Astrocyte of the cerebellum (primary cell): ENCODE measurements at regions of chr17 and their contacts with region 1.

Region 1: GRCh38 chr17:67289181-67289876 is 44.3 kb upstream of the HELZ start:
- DNase-seq: peak; percentile 29
- H3K4me3 ChIP-seq: peak overlapping the region; percentile 9
- CTCF ChIP-seq: no peak

Region 2: DNA sequence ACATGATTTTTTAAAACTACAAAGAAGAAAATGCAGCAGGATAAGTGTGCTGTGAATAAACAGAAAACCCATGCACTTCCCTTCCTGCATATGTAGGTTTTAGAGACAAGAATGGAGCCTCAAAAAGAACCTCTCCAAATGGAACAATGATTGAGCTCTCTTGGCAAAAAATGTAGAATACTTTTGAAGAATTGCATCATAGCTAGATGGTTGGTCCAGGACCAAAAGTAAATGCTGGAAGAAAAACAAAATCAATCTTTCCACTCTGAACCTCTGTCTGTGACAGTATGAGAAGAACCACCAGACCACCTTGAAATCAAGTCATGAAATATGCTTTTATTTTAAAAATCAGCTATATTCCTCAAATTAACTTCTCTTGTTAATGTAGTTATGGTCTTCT is 61.8 kb before region 1 on chr17:
- in situ Hi-C with region 1: no loop called
- DNase-seq: no peak
- H3K4me3 ChIP-seq: no peak overlapping the region
- CTCF ChIP-seq: no peak

Region 3: GRCh38 chr17:67239597-67239996 is 49.7 kb before region 1 on chr17:
- in situ Hi-C with region 1: loop called (anchors 5 kb)
- DNase-seq: no peak
- H3K4me3 ChIP-seq: no peak overlapping the region
- CTCF ChIP-seq: no peak